GM12878 (cell line): ENCODE measurements at regions of chr6 and their contacts with region 1.

Region 1: DNA sequence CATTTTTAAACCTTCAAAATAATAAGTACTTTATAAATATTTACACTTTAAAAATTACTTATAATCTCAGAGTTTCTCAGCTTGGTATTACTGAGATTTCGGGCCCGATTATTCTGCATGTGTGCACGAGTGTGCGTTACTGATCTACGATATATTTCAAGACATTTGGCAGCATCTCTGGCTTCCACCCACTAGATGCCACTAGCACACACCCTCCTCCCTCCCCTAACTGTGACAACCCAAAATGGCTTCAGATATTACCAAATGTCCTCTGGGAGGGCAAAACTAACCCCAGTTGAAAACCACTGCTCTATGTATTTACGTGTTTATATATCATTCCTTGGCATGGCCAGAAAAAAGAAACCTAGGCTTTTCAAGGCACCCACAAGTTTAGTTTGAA is 95.9 kb downstream of the FYN start:
- DNase-seq: no peak
- ATAC-seq: peak; percentile 82
- H3K4me3 ChIP-seq: no peak overlapping the region
- H3K27ac ChIP-seq: peak overlapping the region; percentile 61
- H3K4me1 ChIP-seq: peaks cover 22% of the 10 kb centered on the region
- H3K27me3 ChIP-seq: no peaks in the 10 kb centered on the region
- CTCF ChIP-seq: peak; percentile 39 to 50 (median 43); a peak in 4 of 6 replicates
- EP300 ChIP-seq: no peak
- POLR2A ChIP-seq: no peak
- RAD21 ChIP-seq: peak; percentile 72

Region 2: DNA sequence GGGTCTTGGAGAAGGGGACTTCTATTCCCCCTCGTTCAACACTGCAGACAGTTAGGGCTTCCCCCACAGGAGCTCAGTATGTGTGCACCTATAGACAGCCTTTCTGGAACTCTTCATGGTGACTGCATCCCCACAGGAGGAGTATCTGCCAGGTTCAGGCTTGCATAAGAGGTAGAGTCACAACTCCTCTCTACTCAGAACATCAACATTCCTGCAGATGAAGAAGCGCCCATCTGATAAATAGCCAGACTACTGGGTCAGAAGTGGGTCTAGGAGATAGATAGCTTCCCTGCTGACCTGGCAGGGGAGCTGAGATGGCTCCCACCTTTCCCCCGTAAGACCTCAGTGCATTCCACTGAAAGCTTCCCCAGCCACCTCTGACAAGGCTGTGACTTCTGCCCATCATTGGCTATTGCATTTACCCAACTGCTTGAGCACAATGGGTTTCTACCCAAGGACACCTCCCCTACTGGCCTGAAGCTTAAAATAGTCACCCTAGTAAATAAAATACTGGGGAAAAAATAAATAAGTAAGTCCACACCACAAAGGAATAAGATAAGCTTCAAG is 1087.2 kb before region 1 on chr6:
- CTCF ChIA-PET with region 1: no interaction called
- POLR2A ChIA-PET with region 1: no interaction called
- RAD21 ChIA-PET with region 1: no interaction called
- SMC1A ChIA-PET with region 1: no interaction called
- in situ Hi-C with region 1: no loop called
- intact Hi-C with region 1: no loop called
- DNase-seq: no peak
- ATAC-seq: no peak
- H3K4me3 ChIP-seq: no peak overlapping the region
- H3K27ac ChIP-seq: no peak overlapping the region
- H3K4me1 ChIP-seq: no peaks in the 10 kb centered on the region
- H3K27me3 ChIP-seq: no peaks in the 10 kb centered on the region
- CTCF ChIP-seq: no peak
- EP300 ChIP-seq: no peak
- POLR2A ChIP-seq: no peak
- RAD21 ChIP-seq: no peak

Region 3: DNA sequence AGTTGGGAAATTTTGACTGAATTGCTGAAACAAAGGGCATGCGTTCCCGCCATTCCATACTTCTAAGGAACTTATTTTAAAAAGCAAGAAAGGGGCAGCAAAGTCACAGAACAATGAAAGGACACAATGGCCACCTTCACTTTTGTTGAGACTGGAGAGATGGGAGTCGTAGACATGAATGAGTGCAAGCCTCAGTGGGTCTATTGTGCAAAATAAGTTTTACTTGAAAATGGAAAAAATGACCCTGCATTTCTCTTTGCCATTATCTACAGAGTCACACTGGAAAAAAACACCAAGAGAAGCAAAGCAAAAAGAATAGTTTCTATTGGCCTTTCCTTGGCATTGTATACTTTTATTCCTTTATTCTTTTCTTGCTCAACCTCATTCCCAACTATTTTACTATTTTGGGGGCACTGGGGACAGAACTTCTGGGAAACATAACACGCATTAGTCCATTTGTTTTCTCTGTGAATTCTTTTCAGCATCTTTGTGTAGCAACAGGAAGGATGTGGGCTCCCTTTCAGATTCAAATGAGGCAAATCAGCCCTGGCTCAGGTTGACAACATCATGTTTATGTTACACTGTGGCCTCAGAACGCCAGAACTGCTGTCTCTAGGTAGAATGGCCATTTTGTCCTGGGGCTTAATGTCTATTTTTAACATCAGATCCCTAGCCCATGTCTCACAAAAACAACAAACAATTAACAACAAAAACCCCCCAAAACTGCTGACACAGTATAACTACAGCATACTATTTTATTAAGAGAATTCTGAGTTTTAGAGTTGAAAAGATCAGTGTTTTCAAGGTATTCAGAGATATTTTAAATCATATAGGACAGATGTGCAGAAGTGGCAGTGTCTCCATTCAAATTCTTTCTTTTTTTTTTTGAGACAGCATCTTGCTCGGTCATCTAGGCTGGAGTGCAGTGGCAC is 26.3 kb before region 1 on chr6:
- CTCF ChIA-PET with region 1: interaction called, 7 read pairs
- POLR2A ChIA-PET with region 1: interaction called, 4 read pairs
- RAD21 ChIA-PET with region 1: interaction called, 4 read pairs
- SMC1A ChIA-PET with region 1: interaction called, 12 read pairs
- in situ Hi-C with region 1: no loop called
- intact Hi-C with region 1: no loop called
- DNase-seq: no peak
- ATAC-seq: peak; percentile 83
- H3K4me3 ChIP-seq: no peak overlapping the region
- H3K27ac ChIP-seq: peak overlapping the region; percentile 85
- H3K4me1 ChIP-seq: peaks cover 69% of the 10 kb centered on the region
- H3K27me3 ChIP-seq: no peaks in the 10 kb centered on the region
- CTCF ChIP-seq: no peak
- EP300 ChIP-seq: peak; percentile 27 to 70; a peak in 2 of 4 replicates
- POLR2A ChIP-seq: no peak
- RAD21 ChIP-seq: peak; percentile 19; the same call in 1 of the 2 replicates

Region 4: DNA sequence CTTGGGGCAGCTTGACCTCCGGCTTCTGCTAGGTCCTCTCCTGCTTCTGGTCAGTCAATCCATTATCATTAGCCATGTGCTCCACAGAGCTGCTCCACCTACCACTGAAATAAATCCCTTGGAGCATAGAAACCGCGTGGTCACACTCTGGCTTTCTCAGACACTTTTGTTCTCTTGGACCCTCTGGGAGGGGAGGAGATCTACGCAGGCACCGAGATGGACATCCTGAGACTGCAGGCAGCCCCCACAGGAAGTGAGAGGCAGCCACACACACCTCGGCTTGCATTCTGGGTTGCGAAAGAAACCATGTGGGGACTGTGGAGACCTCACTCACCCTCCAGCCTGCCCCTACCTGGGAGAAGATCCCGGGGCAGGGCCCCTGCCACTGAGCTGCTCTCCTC is 16.4 kb after region 1 on chr6:
- CTCF ChIA-PET with region 1: interaction called, 23 read pairs
- POLR2A ChIA-PET with region 1: interaction called, 20 read pairs
- RAD21 ChIA-PET with region 1: interaction called, 30 read pairs
- SMC1A ChIA-PET with region 1: interaction called, 37 read pairs
- in situ Hi-C with region 1: no loop called
- intact Hi-C with region 1: no loop called
- DNase-seq: no peak
- ATAC-seq: peak; percentile 82
- H3K4me3 ChIP-seq: peak overlapping the region; percentile 66
- H3K27ac ChIP-seq: peak overlapping the region; percentile 85
- H3K4me1 ChIP-seq: peaks cover 36% of the 10 kb centered on the region
- H3K27me3 ChIP-seq: no peaks in the 10 kb centered on the region
- CTCF ChIP-seq: no peak
- EP300 ChIP-seq: no peak
- POLR2A ChIP-seq: peak; percentile 56
- RAD21 ChIP-seq: no peak

Region 5: DNA sequence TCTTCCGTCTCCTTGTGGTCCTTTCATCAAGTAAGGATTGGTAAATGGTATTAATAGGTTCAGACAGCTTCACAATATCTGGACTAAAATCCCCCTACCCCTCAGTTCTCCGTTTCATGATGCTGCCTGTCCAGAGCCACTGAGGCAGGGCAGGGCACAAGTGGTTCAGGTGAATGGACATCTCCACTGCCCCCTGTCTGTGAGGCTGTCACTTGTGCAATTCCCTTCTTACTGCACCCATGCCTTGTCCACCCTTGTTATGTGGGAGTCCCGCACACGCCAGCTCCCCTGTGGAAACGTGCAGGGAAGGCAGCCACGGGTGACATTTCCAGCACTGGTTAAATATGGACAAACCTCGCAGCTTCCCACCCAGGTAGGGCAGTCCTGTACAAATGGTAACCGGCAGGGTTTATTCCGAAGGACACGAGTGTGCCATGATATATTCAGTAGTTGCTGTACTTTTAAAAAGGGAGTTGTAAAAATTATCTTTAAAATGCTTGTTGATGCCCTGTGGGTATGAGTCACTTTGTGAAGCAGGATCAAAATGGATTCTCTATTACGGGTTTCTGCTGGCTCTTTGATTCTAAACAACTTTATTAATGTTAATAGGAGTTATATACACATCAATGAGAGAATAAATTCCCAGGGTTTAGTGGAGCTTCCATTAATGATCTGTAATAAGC is 22.4 kb after region 1 on chr6:
- CTCF ChIA-PET with region 1: interaction called, 11 read pairs
- POLR2A ChIA-PET with region 1: interaction called, 3 read pairs
- RAD21 ChIA-PET with region 1: interaction called, 10 read pairs
- SMC1A ChIA-PET with region 1: interaction called, 37 read pairs
- in situ Hi-C with region 1: no loop called
- intact Hi-C with region 1: no loop called
- DNase-seq: no peak
- ATAC-seq: no peak
- H3K4me3 ChIP-seq: no peak overlapping the region
- H3K27ac ChIP-seq: no peak overlapping the region
- H3K4me1 ChIP-seq: peaks cover 46% of the 10 kb centered on the region
- H3K27me3 ChIP-seq: no peaks in the 10 kb centered on the region
- CTCF ChIP-seq: peak in 2 of 3 experiments; percentile 12 to 22; a peak in 1 of 6 replicates
- EP300 ChIP-seq: no peak
- POLR2A ChIP-seq: no peak
- RAD21 ChIP-seq: no peak

Region 6: DNA sequence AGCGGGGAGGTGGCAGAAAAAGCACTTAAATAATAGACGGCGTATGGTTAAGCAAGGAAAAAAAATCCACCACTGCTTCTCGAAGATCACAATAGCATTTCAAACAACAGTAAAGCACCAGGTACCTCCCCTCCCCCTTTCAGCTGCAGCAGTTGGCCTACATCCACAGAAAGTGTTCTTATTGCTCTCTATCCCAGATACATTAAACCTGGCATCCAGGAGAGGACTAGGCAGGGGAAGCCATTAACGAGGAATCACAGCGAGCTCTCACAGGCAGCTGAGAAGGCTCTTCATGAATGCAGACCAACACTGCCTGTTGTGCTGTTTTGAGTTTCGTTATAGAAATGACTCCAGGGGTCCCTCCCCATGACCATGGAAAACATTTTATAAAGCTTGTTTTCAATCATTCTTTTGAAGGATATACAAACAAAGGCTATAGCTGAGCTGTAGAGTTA is 84.1 kb after region 1 on chr6:
- CTCF ChIA-PET with region 1: interaction called, 6 read pairs
- POLR2A ChIA-PET with region 1: no interaction called
- RAD21 ChIA-PET with region 1: interaction called, 3 read pairs
- SMC1A ChIA-PET with region 1: interaction called, 10 read pairs
- in situ Hi-C with region 1: no loop called
- intact Hi-C with region 1: no loop called
- DNase-seq: no peak
- ATAC-seq: no peak
- H3K4me3 ChIP-seq: no peak overlapping the region
- H3K27ac ChIP-seq: no peak overlapping the region
- H3K4me1 ChIP-seq: peaks cover 21% of the 10 kb centered on the region
- H3K27me3 ChIP-seq: no peaks in the 10 kb centered on the region
- CTCF ChIP-seq: no peak
- EP300 ChIP-seq: no peak
- POLR2A ChIP-seq: no peak
- RAD21 ChIP-seq: no peak

Region 7: GRCh38 chr6:111873178-111874024 is 96.0 kb after region 1 on chr6 and contains the start of gene FYN:
- CTCF ChIA-PET with region 1: interaction called, 10 read pairs
- POLR2A ChIA-PET with region 1: interaction called, 5 read pairs
- RAD21 ChIA-PET with region 1: interaction called, 16 read pairs
- SMC1A ChIA-PET with region 1: interaction called, 5 read pairs
- in situ Hi-C with region 1: no loop called
- intact Hi-C with region 1: no loop called
- DNase-seq: peak; percentile 76
- ATAC-seq: peak; percentile 92
- H3K4me3 ChIP-seq: peak within 1 kb of the TSS; percentile 98
- H3K27ac ChIP-seq: peak within 1 kb of the TSS; percentile 76
- H3K4me1 ChIP-seq: peaks cover 5% of the 10 kb centered on the region
- H3K27me3 ChIP-seq: no peaks in the 10 kb centered on the region
- CTCF ChIP-seq: peak; percentile 28 to 65 (median 30); a peak in 5 of 6 replicates
- EP300 ChIP-seq: no peak
- POLR2A ChIP-seq: peak; percentile 95
- RAD21 ChIP-seq: peak; percentile 48
- polyA plus RNA-seq, gene FYN: 51.4 to 55.1 TPM

Region 8: GRCh38 chr6:111997078-111997852 is 219.9 kb after region 1 on chr6:
- CTCF ChIA-PET with region 1: interaction called, 17 read pairs
- POLR2A ChIA-PET with region 1: interaction called, 3 read pairs
- RAD21 ChIA-PET with region 1: interaction called, 5 read pairs
- SMC1A ChIA-PET with region 1: interaction called, 20 read pairs
- in situ Hi-C with region 1: no loop called
- intact Hi-C with region 1: loop called (anchors 5 kb)
- DNase-seq: no peak
- ATAC-seq: peak; percentile 85
- H3K4me3 ChIP-seq: no peak overlapping the region
- H3K27ac ChIP-seq: no peak overlapping the region
- H3K4me1 ChIP-seq: peaks cover 28% of the 10 kb centered on the region
- H3K27me3 ChIP-seq: no peaks in the 10 kb centered on the region
- CTCF ChIP-seq: peak; percentile 85 to 95 (median 93); a peak in 5 of 6 replicates
- EP300 ChIP-seq: no peak
- POLR2A ChIP-seq: no peak
- RAD21 ChIP-seq: peak; percentile 99

Region 9: DNA sequence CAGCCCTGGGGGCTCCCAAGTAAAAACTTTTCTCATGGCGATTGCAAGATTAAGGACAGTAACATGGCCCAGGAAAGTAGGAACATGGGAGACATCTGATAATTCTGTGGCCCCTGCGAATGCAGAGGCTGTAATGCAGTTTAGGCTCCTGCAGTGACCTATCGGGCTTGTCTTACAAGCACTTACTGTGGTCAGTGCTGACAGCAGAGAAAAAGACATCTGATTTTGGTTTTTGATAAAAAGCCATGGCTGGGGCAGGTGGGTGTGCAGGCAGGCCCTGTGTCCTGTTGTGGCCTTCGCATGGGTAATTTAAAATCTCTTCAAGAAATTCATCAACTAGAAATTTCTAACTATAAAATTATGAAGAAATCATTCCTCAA is 257.2 kb after region 1 on chr6:
- CTCF ChIA-PET with region 1: no interaction called
- POLR2A ChIA-PET with region 1: no interaction called
- RAD21 ChIA-PET with region 1: no interaction called
- SMC1A ChIA-PET with region 1: no interaction called
- in situ Hi-C with region 1: no loop called
- intact Hi-C with region 1: no loop called
- DNase-seq: no peak
- ATAC-seq: no peak
- H3K4me3 ChIP-seq: no peak overlapping the region
- H3K27ac ChIP-seq: no peak overlapping the region
- H3K4me1 ChIP-seq: no peaks in the 10 kb centered on the region
- H3K27me3 ChIP-seq: no peaks in the 10 kb centered on the region
- CTCF ChIP-seq: no peak
- EP300 ChIP-seq: no peak
- POLR2A ChIP-seq: no peak
- RAD21 ChIP-seq: no peak